Caco-2 (cell line): ENCODE measurements at regions of chr4 and their contacts with region 1.

Region 1: GRCh38 chr4:155371432-155372043 is 5.2 kb downstream of the MAP9 start:
- DNase-seq: no peak
- H3K4me3 ChIP-seq: no peak overlapping the region
- H3K4me3 Mint-ChIP-seq: no peak overlapping the region
- H3K27ac Mint-ChIP-seq: no peak overlapping the region
- H3K4me1 ChIP-seq: no peaks in the 10 kb centered on the region
- H3K4me1 Mint-ChIP-seq: no peaks in the 10 kb centered on the region
- H3K27me3 ChIP-seq: no peaks in the 10 kb centered on the region
- H3K27me3 Mint-ChIP-seq: peaks cover 6% of the 10 kb centered on the region
- CTCF ChIP-seq: peak; percentile 17 to 35

Region 2: DNA sequence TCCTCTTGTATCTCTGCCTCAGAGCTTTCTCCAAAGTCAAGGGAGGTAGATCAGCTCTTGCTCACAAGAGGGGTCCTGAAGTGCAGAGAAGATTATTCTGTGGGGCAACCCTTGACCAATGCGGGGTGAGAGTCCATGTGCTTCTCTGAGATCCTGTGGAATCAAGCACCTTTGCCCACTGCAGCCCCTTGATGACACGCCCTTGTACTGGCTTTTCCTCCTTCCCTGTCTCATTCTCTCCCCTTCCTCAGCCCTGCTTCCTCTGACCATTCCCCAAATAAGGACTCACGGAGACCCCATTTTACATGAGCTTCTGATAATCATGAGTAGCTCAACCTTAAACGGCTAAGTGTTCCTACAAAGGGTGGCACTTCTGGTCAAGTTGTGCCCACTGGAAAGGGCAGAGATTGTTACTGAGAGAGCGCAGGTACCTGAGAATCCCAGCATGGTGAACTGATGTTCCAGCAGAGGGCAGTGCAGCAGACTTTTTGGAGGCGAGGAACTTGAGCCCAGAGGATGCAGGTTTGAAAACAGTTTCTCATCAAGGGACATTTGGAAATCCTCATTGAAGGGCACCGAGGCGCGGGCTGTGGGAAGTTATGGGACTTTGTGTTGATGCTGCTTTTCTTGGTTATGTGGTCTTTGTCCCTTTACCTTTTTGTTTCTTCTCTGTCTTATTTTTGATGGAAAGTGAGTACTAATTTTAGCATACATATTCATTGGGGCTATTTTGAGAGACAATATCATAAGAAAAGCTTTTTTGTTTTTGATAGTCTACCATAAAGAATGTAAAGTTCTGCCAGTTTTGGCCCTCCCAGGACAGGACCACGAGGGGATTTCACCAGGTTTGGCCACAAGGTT is 389.1 kb before region 1 on chr4:
- CTCF ChIA-PET with region 1: no interaction called
- POLR2A ChIA-PET with region 1: no interaction called
- intact Hi-C with region 1: loop called (anchors 1 kb)
- DNase-seq: peak; percentile 52 to 55
- H3K4me3 ChIP-seq: no peak overlapping the region
- H3K4me3 Mint-ChIP-seq: no peak overlapping the region
- H3K27ac Mint-ChIP-seq: no peak overlapping the region
- H3K4me1 ChIP-seq: no peaks in the 10 kb centered on the region
- H3K4me1 Mint-ChIP-seq: no peaks in the 10 kb centered on the region
- H3K27me3 ChIP-seq: no peaks in the 10 kb centered on the region
- H3K27me3 Mint-ChIP-seq: peaks cover 21% of the 10 kb centered on the region
- CTCF ChIP-seq: peak; percentile 51 to 64

Region 3: GRCh38 chr4:155025762-155026457 is 345.6 kb before region 1 on chr4:
- CTCF ChIA-PET with region 1: no interaction called
- POLR2A ChIA-PET with region 1: no interaction called
- intact Hi-C with region 1: loop called (anchors 5 kb)
- DNase-seq: peak; percentile 53 to 58
- H3K4me3 ChIP-seq: no peak overlapping the region
- H3K4me3 Mint-ChIP-seq: no peak overlapping the region
- H3K27ac Mint-ChIP-seq: no peak overlapping the region
- H3K4me1 ChIP-seq: no peaks in the 10 kb centered on the region
- H3K4me1 Mint-ChIP-seq: no peaks in the 10 kb centered on the region
- H3K27me3 ChIP-seq: no peaks in the 10 kb centered on the region
- H3K27me3 Mint-ChIP-seq: peaks cover 4% of the 10 kb centered on the region
- CTCF ChIP-seq: peak; percentile 51 to 54

Region 4: GRCh38 chr4:155304375-155304774 is 67.2 kb before region 1 on chr4:
- CTCF ChIA-PET with region 1: no interaction called
- POLR2A ChIA-PET with region 1: no interaction called
- intact Hi-C with region 1: no loop called
- DNase-seq: no peak
- H3K4me3 ChIP-seq: no peak overlapping the region
- H3K4me3 Mint-ChIP-seq: no peak overlapping the region
- H3K27ac Mint-ChIP-seq: no peak overlapping the region
- H3K4me1 ChIP-seq: peaks cover 1% of the 10 kb centered on the region
- H3K4me1 Mint-ChIP-seq: peaks cover 2% of the 10 kb centered on the region
- H3K27me3 ChIP-seq: no peaks in the 10 kb centered on the region
- H3K27me3 Mint-ChIP-seq: no peaks in the 10 kb centered on the region
- CTCF ChIP-seq: no peak

Region 5: GRCh38 chr4:155408796-155409195 is 37.3 kb after region 1 on chr4:
- CTCF ChIA-PET with region 1: no interaction called
- POLR2A ChIA-PET with region 1: no interaction called
- intact Hi-C with region 1: no loop called
- DNase-seq: no peak
- H3K4me3 ChIP-seq: no peak overlapping the region
- H3K4me3 Mint-ChIP-seq: no peak overlapping the region
- H3K27ac Mint-ChIP-seq: no peak overlapping the region
- H3K4me1 ChIP-seq: peaks cover 3% of the 10 kb centered on the region
- H3K4me1 Mint-ChIP-seq: no peaks in the 10 kb centered on the region
- H3K27me3 ChIP-seq: no peaks in the 10 kb centered on the region
- H3K27me3 Mint-ChIP-seq: no peaks in the 10 kb centered on the region
- CTCF ChIP-seq: no peak